ENCODE measurements at regions of chr16 and their contacts with region 1.

Region 1: DNA sequence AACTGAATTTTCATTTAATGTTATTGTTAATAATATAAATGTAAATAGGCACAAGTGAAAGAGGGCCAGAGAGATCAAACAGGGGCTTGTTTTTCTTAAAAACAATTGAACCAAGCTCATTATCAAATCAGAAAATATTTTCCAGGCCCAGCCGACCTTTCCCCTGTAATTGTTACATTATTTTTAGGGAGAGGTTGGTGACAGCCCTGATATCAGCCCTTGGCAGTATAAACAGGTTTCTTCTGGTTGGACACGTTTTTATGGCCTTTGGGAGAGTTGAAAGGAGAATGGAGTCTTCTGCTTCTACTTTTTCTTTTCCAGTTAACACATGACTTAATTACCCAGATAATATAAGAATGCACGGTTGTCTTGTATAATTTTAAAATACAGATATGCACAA is 40.0 kb upstream of the COQ7 start:
- DNase-seq: no peak
- ATAC-seq: no peak
- H3K4me3 ChIP-seq: no peak overlapping the region
- H3K27ac ChIP-seq: no peak overlapping the region
- H3K4me1 ChIP-seq: no peaks in the 10 kb centered on the region
- CTCF ChIP-seq: no peak
- EP300 ChIP-seq: no peak
- POLR2A ChIP-seq: no peak
- RAD21 ChIP-seq: no peak

Region 2: DNA sequence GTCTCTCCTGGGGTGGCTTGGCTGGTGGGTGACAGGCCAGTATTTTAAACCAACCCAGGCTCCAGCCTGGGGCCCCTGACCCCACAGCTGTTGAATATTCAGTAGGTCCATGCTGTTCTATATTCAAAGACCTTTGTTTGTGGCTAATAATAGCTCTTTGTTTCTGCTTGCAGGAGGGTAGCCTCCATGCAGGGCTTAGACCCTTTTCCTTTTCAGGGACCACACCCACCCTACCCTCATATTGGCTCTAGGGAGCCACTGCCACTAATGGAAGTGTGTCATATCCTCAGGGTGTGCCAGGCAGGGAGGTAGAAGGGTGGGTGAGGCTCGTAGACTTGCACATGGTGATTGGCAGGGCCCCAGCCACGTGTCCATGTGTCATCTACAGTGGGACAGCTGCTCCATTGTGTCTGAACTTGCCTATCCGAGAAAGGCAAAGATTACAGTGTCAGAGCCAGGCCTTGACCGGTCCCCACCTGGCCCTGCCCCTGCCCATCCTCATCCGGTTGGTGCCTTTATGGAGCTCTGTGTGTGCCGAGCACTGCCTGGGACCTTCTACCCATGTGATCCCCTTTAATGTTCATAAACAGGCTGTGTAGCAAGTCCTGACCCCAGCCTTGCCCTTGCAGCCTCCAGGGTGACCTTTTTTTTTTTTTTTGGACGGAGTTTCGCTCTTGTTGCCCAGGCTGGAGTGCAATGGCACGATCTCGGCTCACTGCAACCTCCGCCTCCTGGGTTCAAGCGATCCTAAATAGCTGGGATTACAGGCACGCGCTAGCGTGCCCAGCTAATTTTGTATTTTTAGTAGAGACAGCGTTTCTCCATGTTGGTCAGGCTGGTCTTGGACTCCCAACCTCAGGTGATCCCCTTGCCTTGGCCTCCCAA is 21.6 kb before region 1 on chr16:
- CTCF ChIA-PET with region 1: interaction called, 10 read pairs
- POLR2A ChIA-PET with region 1: no interaction called
- DNase-seq: peak; percentile 44 to 76
- ATAC-seq: peak; percentile 60 to 66; a peak in 5 of 6 replicates
- H3K4me3 ChIP-seq: no peak overlapping the region
- H3K27ac ChIP-seq: peak overlapping the region; percentile 46 to 54
- H3K4me1 ChIP-seq: peaks cover 36% of the 10 kb centered on the region
- CTCF ChIP-seq: no peak
- EP300 ChIP-seq: no peak
- POLR2A ChIP-seq: no peak
- RAD21 ChIP-seq: no peak

Region 3: DNA sequence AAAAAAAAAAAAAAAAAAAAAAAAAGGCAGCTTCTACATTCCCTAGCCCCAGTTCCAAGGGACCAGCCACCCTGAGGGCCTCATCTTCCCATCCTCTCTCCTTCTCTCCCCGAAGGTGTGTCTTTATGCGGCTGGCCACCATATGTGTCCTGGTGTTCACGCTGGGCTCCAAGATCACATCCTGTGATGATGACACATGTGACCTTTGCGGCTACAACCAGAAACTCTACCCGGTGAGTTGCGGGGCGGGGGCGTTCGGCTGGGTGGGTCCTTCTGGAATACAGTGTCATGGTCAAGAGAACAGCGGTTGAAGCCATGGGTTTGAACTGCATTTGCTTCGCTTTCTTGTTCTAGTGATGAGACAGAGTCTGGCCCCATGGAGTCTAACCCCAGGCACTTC is 17.4 kb after region 1 on chr16:
- CTCF ChIA-PET with region 1: no interaction called
- POLR2A ChIA-PET with region 1: no interaction called
- DNase-seq: no peak
- ATAC-seq: no peak
- H3K4me3 ChIP-seq: no peak overlapping the region
- H3K27ac ChIP-seq: no peak overlapping the region
- H3K4me1 ChIP-seq: no peaks in the 10 kb centered on the region
- CTCF ChIP-seq: no peak
- EP300 ChIP-seq: no peak
- POLR2A ChIP-seq: no peak
- RAD21 ChIP-seq: no peak

Region 4: GRCh38 chr16:19102187-19102872 is 74.9 kb after region 1 on chr16:
- CTCF ChIA-PET with region 1: no interaction called
- POLR2A ChIA-PET with region 1: no interaction called
- DNase-seq: no peak
- ATAC-seq: no peak
- H3K4me3 ChIP-seq: no peak overlapping the region
- H3K27ac ChIP-seq: no peak overlapping the region
- H3K4me1 ChIP-seq: peaks cover 5% of the 10 kb centered on the region
- CTCF ChIP-seq: no peak
- EP300 ChIP-seq: no peak
- POLR2A ChIP-seq: no peak
- RAD21 ChIP-seq: no peak

Region 5: GRCh38 chr16:19127674-19128131 is 100.3 kb after region 1 on chr16:
- CTCF ChIA-PET with region 1: no interaction called
- POLR2A ChIA-PET with region 1: no interaction called
- DNase-seq: no peak
- ATAC-seq: no peak
- H3K4me3 ChIP-seq: no peak overlapping the region
- H3K27ac ChIP-seq: 0 out of 6 replicates have a peak overlapping the region, but pooled peaks of 1 of the 2 experiments have one; percentile 8
- H3K4me1 ChIP-seq: peaks cover 45% of the 10 kb centered on the region
- CTCF ChIP-seq: no peak
- EP300 ChIP-seq: no peak
- POLR2A ChIP-seq: no peak
- RAD21 ChIP-seq: no peak

Region 6: GRCh38 chr16:19458718-19459379 is 431.4 kb after region 1 on chr16:
- CTCF ChIA-PET with region 1: no interaction called
- POLR2A ChIA-PET with region 1: no interaction called
- DNase-seq: no peak
- ATAC-seq: no peak
- H3K4me3 ChIP-seq: no peak overlapping the region
- H3K27ac ChIP-seq: no peak overlapping the region
- H3K4me1 ChIP-seq: peaks cover 3% of the 10 kb centered on the region; the same call in 2 of the 3 replicates
- CTCF ChIP-seq: no peak
- EP300 ChIP-seq: no peak
- POLR2A ChIP-seq: no peak
- RAD21 ChIP-seq: no peak